Cardiac septum (tissue), 1 donor: ENCODE measurements at regions of chr2 and their contacts with region 1.

Region 1: DNA sequence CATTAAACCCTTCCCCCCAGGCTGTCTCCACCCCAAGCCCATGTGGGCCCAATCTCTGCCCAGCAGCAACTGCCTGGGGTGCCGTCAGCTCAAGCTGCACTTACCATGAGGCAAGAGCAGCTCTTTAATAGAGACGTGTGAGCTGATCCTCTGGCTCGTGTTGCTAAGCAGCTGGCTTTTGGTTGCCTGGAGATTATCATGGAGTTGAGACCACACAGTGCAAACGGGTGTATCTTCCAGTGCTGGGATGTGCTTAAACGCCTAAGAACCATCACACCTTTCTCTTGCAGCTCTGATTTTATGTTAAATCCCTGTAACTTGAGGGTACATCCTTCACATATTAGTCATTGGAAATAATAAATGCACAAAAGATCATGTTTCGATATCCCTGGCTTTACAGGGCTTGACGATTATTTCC is 271.1 kb downstream of the PRKCE start:
- DNase-seq: peak; percentile 82

Region 2: DNA sequence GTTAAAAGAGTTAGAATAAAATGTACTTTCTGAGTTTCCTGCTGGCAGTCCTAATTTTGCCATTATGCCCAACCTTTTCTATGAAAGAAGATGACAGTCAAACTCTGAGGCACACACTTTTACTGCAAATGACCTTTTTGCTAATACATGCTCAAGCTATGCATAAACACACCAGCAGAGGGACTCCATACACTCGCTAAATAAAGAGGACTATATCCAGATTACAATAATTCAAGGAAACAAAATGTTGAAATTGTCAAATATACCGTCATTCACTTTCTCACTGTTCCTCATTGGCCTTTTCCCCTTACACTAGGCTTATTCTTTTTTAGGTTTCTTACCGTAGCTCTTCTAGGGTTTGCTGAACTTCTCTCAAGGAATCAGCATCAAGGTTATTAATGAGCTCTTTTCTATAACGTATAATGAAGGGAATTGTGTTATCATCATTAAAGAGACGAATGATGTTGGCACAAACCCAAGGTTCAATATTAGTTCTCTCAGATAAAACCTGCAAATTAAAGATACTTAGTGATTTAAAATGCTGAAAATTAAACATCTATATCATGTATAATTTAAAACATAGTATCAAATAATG is 337.2 kb before region 1 on chr2:
- intact Hi-C with region 1: no loop called
- DNase-seq: no peak

Region 3: GRCh38 chr2:45882707-45883602 is 39.6 kb before region 1 on chr2:
- intact Hi-C with region 1: loop called (anchors 2 kb)
- DNase-seq: no peak

Region 4: DNA sequence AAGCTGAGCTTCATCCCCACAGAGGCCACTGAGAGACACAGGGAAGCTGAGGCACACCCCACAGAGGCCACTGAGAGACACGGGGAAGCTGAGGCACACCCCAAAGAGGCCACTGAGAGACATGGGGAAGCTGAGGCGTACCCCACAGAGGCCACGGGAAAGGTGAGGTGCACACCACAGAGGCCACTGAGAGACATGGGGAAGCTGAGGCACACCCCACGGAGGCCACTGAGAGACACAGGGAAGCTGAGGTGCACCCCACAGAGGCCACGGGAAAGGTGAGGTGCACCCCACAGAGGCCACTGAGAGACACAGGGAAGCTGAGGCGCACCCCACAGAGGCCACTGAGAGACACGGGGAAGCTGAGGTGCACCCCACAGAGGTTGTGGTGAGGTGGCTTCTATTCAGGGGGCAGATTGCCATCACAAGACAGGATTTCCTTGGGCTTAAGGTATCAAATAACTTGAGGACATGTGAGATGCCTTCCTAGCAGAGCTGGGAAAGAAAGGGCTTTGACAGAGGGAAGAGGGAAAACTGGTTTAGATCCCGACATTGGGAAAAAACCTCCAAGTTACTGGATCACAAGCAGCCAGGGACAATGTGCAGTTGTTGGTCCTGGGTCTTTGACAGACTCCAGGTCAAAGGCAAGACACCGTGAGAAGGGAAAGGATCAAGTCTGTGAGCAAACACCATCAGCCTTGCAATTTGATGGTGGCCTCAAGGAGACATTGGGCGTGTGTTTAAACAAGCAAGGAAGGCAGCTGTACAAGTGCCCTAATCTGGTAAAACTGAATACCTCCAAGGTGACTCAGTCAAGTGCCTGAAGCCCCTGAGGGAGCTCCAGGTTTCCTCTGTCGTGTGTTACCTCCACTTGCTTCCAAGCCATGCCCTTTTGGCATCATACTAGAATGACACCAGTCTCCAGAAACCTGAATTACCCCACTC is 241.3 kb after region 1 on chr2:
- intact Hi-C with region 1: no loop called
- DNase-seq: no peak